Calu3 (cell line): ENCODE measurements at regions of chr10 and their contacts with region 1.

Region 1: DNA sequence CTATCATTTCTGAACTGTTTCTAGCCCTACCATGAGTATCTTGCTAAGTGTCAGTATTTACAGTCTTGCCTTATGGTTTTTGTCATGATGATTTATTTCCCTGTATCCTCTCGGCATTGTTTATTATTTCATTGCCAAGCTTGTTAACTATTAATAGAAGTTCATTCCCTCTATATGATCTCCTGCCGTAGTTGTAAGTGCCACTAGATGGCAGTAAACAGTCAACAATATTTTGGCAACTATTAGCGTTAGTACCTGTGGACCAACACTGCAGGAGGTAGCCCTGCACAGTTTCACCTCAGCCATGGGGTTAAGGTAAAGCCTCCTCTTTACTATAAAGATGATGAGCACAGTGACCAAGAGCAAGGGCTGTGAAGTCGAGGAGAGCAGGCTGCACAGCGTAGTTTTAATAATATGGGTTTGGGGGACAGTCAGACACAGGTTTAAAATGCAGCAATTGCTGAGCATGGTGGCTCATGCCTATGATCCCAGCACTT is 26.1 kb upstream of the CCNJ start:
- DNase-seq: peak; percentile 40
- H3K4me3 Mint-ChIP-seq: no peak overlapping the region
- H3K27ac Mint-ChIP-seq: no peak overlapping the region
- H3K4me1 Mint-ChIP-seq: no peaks in the 10 kb centered on the region
- H3K27me3 Mint-ChIP-seq: no peaks in the 10 kb centered on the region
- CTCF ChIP-seq: peak; percentile 31

Region 2: GRCh38 chr10:95333997-95334804 is 683.0 kb before region 1 on chr10:
- CTCF ChIA-PET with region 1: no interaction called
- intact Hi-C with region 1: no loop called
- DNase-seq: no peak
- H3K4me3 Mint-ChIP-seq: no peak overlapping the region
- H3K27ac Mint-ChIP-seq: no peak overlapping the region
- H3K4me1 Mint-ChIP-seq: peaks cover 16% of the 10 kb centered on the region
- H3K27me3 Mint-ChIP-seq: no peaks in the 10 kb centered on the region
- CTCF ChIP-seq: no peak

Region 3: GRCh38 chr10:95832216-95833041 is 184.8 kb before region 1 on chr10:
- CTCF ChIA-PET with region 1: no interaction called
- intact Hi-C with region 1: no loop called
- DNase-seq: no peak
- H3K4me3 Mint-ChIP-seq: no peak overlapping the region
- H3K27ac Mint-ChIP-seq: no peak overlapping the region
- H3K4me1 Mint-ChIP-seq: no peaks in the 10 kb centered on the region
- H3K27me3 Mint-ChIP-seq: no peaks in the 10 kb centered on the region
- CTCF ChIP-seq: no peak

Region 4: GRCh38 chr10:96229568-96230030 is 212.4 kb after region 1 on chr10:
- CTCF ChIA-PET with region 1: interaction called, 10 read pairs
- intact Hi-C with region 1: no loop called
- DNase-seq: peak; percentile 75
- H3K4me3 Mint-ChIP-seq: peak overlapping the region; percentile 14
- H3K27ac Mint-ChIP-seq: peak overlapping the region; percentile 5
- H3K4me1 Mint-ChIP-seq: no peaks in the 10 kb centered on the region
- H3K27me3 Mint-ChIP-seq: no peaks in the 10 kb centered on the region
- CTCF ChIP-seq: peak; percentile 82

Region 5: GRCh38 chr10:96292971-96293920 is 276.0 kb after region 1 on chr10:
- CTCF ChIA-PET with region 1: interaction called, 3 read pairs
- intact Hi-C with region 1: loop called (anchors 1 kb)
- DNase-seq: no peak
- H3K4me3 Mint-ChIP-seq: no peak overlapping the region
- H3K27ac Mint-ChIP-seq: no peak overlapping the region
- H3K4me1 Mint-ChIP-seq: peaks cover 13% of the 10 kb centered on the region
- H3K27me3 Mint-ChIP-seq: peaks cover 25% of the 10 kb centered on the region
- CTCF ChIP-seq: peak; percentile 42

Region 6: GRCh38 chr10:96339957-96340904 is 323.0 kb after region 1 on chr10:
- CTCF ChIA-PET with region 1: no interaction called
- intact Hi-C with region 1: loop called (anchors 5 kb)
- DNase-seq: peak; percentile 54
- H3K4me3 Mint-ChIP-seq: no peak overlapping the region
- H3K27ac Mint-ChIP-seq: no peak overlapping the region
- H3K4me1 Mint-ChIP-seq: no peaks in the 10 kb centered on the region
- H3K27me3 Mint-ChIP-seq: peaks cover 55% of the 10 kb centered on the region
- CTCF ChIP-seq: peak; percentile 30